CD8-positive, alpha-beta T cell (primary cell): ENCODE measurements at regions of chr12 and their contacts with region 1.

Region 1: GRCh38 chr12:94532490-94533422 is 73.1 kb upstream of the CEP83 start:
- DNase-seq: peak; percentile 47 to 79 (median 70)
- ATAC-seq: peak; percentile 79
- H3K4me3 ChIP-seq: no peak overlapping the region
- H3K4me3 Mint-ChIP-seq: no peak overlapping the region
- H3K27ac ChIP-seq: no peak overlapping the region
- H3K27ac Mint-ChIP-seq: no peak overlapping the region
- H3K4me1 ChIP-seq: no peaks in the 10 kb centered on the region
- H3K4me1 Mint-ChIP-seq: no peaks in the 10 kb centered on the region
- H3K27me3 ChIP-seq: no peaks in the 10 kb centered on the region
- H3K27me3 Mint-ChIP-seq: peaks cover 10% of the 10 kb centered on the region
- CTCF ChIP-seq: peak; percentile 75

Region 2: DNA sequence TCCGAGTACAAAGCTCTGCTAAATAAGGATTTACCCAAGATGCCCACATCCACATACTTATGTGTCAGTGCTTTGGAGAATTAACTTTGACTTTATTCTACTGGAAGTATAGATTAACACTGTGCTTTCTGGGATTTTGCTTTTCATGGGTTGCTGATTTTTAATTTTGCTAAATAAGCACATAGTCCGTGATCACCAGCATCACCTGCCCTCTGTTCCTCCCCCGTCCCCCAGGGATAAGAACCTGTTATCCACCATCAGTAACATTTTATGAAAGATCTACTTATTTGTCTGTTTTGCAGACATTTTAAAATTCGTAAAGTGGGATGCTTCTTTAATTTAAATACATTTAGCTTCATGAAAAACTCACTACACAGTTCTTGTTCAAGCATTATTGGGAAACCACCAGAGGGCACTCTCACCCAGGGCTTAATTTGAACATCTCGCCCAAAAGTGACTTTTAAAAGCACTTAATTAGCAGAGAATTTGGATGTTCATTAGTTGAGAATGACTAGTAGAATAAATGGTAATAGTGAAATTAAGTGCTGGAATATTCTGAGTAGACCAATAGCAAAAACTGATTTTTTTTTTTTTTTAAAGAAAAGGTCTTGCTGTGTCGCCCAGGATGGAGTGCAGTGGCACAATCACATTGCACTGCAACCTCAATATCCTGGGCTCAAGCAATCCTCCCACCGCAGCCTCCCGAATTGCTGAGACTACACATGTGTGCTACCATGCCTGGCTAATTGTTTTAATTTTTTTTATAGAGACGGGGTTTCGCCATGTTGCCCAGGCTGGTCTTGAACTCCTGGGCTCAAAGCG is 1029.7 kb before region 1 on chr12:
- CTCF ChIA-PET with region 1: interaction called, 6 read pairs
- POLR2A ChIA-PET with region 1: no interaction called
- intact Hi-C with region 1: loop called (anchors 2 to 5 kb)
- DNase-seq: peak; percentile 34 to 72 (median 64)
- ATAC-seq: peak; percentile 36
- H3K4me3 ChIP-seq: no peak overlapping the region
- H3K4me3 Mint-ChIP-seq: no peak overlapping the region
- H3K27ac ChIP-seq: no peak overlapping the region
- H3K27ac Mint-ChIP-seq: no peak overlapping the region
- H3K4me1 ChIP-seq: no peaks in the 10 kb centered on the region
- H3K4me1 Mint-ChIP-seq: no peaks in the 10 kb centered on the region
- H3K27me3 ChIP-seq: no peaks in the 10 kb centered on the region
- H3K27me3 Mint-ChIP-seq: no peaks in the 10 kb centered on the region
- CTCF ChIP-seq: peak; percentile 95

Region 3: GRCh38 chr12:94025756-94026155 is 507.0 kb before region 1 on chr12:
- CTCF ChIA-PET with region 1: no interaction called
- POLR2A ChIA-PET with region 1: no interaction called
- intact Hi-C with region 1: no loop called
- DNase-seq: no peak
- ATAC-seq: no peak
- H3K4me3 ChIP-seq: no peak overlapping the region
- H3K4me3 Mint-ChIP-seq: no peak overlapping the region
- H3K27ac ChIP-seq: no peak overlapping the region
- H3K27ac Mint-ChIP-seq: no peak overlapping the region
- H3K4me1 ChIP-seq: peaks cover 6% of the 10 kb centered on the region
- H3K4me1 Mint-ChIP-seq: peaks cover 9% of the 10 kb centered on the region
- H3K27me3 ChIP-seq: no peaks in the 10 kb centered on the region
- H3K27me3 Mint-ChIP-seq: peaks cover 3% of the 10 kb centered on the region
- CTCF ChIP-seq: no peak

Region 4: GRCh38 chr12:94140556-94140955 is 392.2 kb before region 1 on chr12:
- CTCF ChIA-PET with region 1: interaction called, 33 read pairs
- POLR2A ChIA-PET with region 1: interaction called, 3 read pairs
- intact Hi-C with region 1: loop called in 1 of 2 experiments (anchors 1 kb)
- DNase-seq: peak in 7 of 9 experiments; percentile 19 to 68 (median 51)
- ATAC-seq: peak; percentile 49
- H3K4me3 ChIP-seq: no peak overlapping the region
- H3K4me3 Mint-ChIP-seq: no peak overlapping the region
- H3K27ac ChIP-seq: no peak overlapping the region
- H3K27ac Mint-ChIP-seq: no peak overlapping the region
- H3K4me1 ChIP-seq: no peaks in the 10 kb centered on the region
- H3K4me1 Mint-ChIP-seq: no peaks in the 10 kb centered on the region
- H3K27me3 ChIP-seq: no peaks in the 10 kb centered on the region
- H3K27me3 Mint-ChIP-seq: no peaks in the 10 kb centered on the region
- CTCF ChIP-seq: peak; percentile 48

Region 5: DNA sequence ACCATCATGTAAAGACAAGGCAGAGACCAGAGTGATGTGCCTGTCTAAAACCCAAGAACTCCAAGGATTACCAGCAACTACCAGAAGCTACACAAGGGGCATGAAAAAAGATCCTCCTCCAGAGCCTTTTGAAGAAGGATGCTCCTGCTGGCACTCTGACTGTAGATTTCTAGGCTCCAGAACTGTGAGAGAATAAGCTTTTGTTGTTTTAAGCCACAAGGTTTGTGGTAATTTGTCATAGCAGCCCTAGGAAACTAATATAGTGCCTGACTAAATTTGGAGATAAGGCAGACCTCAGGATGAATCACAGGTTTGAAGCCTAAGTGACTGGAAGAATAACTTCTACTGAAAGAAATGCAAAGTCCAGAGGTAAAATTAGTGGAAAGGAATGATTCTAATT is 206.0 kb before region 1 on chr12:
- CTCF ChIA-PET with region 1: no interaction called
- POLR2A ChIA-PET with region 1: no interaction called
- intact Hi-C with region 1: loop called in 1 of 2 experiments (anchors 10 kb)
- DNase-seq: no peak
- ATAC-seq: no peak
- H3K4me3 ChIP-seq: no peak overlapping the region
- H3K4me3 Mint-ChIP-seq: no peak overlapping the region
- H3K27ac ChIP-seq: no peak overlapping the region
- H3K27ac Mint-ChIP-seq: no peak overlapping the region
- H3K4me1 ChIP-seq: no peaks in the 10 kb centered on the region
- H3K4me1 Mint-ChIP-seq: no peaks in the 10 kb centered on the region
- H3K27me3 ChIP-seq: no peaks in the 10 kb centered on the region
- H3K27me3 Mint-ChIP-seq: no peaks in the 10 kb centered on the region
- CTCF ChIP-seq: no peak

Region 6: GRCh38 chr12:94560431-94561221 is 27.9 kb after region 1 on chr12:
- CTCF ChIA-PET with region 1: no interaction called
- POLR2A ChIA-PET with region 1: no interaction called
- intact Hi-C with region 1: no loop called
- DNase-seq: no peak
- ATAC-seq: no peak
- H3K4me3 ChIP-seq: no peak overlapping the region
- H3K4me3 Mint-ChIP-seq: no peak overlapping the region
- H3K27ac ChIP-seq: no peak overlapping the region
- H3K27ac Mint-ChIP-seq: no peak overlapping the region
- H3K4me1 ChIP-seq: no peaks in the 10 kb centered on the region
- H3K4me1 Mint-ChIP-seq: no peaks in the 10 kb centered on the region
- H3K27me3 ChIP-seq: no peaks in the 10 kb centered on the region
- H3K27me3 Mint-ChIP-seq: peaks cover 17% of the 10 kb centered on the region
- CTCF ChIP-seq: no peak